ENCODE measurements at regions of chr4 and their contacts with region 1.

Region 1: DNA sequence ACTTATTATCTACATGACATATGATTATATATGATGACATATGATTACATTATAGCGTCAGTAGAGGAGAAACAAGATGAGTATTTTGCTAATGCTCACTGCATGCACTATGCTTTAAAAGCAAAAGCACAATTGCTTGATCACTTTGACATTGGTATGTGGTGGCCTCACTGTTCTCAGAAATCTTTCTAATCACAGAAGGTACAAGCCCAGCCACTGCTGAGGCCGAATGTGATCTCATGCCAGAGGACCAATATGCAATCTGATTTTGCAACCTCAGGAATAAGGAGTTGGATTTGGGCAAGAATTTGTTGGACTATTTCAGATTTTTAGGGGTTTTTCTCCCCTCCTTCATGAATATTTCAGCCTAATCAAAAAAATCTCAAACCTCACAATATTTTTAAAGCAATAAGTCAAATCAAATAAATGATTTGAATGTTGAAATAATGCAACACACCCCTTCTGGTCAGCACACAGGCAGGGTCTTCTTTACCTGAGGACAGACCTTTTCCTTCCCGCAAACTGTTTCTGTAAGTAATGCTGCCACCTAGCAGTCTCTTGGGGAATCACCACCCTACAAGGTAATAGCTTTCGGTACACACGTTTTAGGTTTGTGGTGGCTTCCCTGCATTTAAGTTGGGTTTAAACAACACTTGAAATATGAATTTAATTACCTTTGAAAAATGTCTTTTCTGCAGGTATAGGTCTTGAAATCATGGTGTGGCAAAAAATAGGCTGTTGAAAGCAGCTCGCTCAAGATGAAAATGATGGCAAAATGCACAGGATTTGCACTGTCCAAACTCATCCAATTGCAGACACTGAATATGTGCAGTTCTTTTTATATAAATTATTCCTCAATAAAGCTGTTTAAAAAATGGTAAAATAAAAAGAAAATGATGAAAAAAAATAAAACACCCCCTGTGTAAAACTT is 4.8 kb upstream of the CXCL13 start:
- DNase-seq: peak; percentile 59
- H3K4me3 Mint-ChIP-seq: no peak overlapping the region
- H3K27ac Mint-ChIP-seq: no peak overlapping the region
- H3K4me1 Mint-ChIP-seq: peaks cover 13% of the 10 kb centered on the region
- H3K27me3 Mint-ChIP-seq: peaks cover 11% of the 10 kb centered on the region

Region 2: GRCh38 chr4:77367638-77368037 is 233.1 kb before region 1 on chr4:
- CTCF ChIA-PET with region 1: interaction called, 4 read pairs
- intact Hi-C with region 1: loop called (anchors 2 kb)
- DNase-seq: no peak
- H3K4me3 Mint-ChIP-seq: no peak overlapping the region
- H3K27ac Mint-ChIP-seq: no peak overlapping the region
- H3K4me1 Mint-ChIP-seq: no peaks in the 10 kb centered on the region
- H3K27me3 Mint-ChIP-seq: peaks cover 4% of the 10 kb centered on the region

Region 3: DNA sequence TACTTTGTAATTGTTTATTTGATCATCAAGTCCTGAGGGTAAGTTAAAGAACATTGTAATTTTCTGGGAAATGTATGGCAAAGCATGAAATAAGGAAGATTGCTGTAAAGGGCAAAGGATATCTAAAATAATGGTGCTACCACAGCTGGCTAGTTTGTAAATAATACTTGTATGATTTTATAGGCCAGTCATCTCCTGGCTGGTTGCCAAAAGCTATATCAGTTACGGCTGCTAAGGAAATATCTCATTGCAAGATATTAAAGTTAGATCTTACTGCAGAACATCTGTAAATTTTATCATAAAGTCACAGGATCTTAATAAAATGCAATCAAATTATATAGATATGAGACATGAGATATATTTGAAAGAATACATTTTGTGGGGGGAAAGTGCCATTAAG is 145.9 kb before region 1 on chr4:
- CTCF ChIA-PET with region 1: interaction called, 10 read pairs
- intact Hi-C with region 1: no loop called
- DNase-seq: no peak
- H3K4me3 Mint-ChIP-seq: no peak overlapping the region
- H3K27ac Mint-ChIP-seq: no peak overlapping the region
- H3K4me1 Mint-ChIP-seq: no peaks in the 10 kb centered on the region
- H3K27me3 Mint-ChIP-seq: no peaks in the 10 kb centered on the region

Region 4: GRCh38 chr4:77473509-77473908 is 127.3 kb before region 1 on chr4:
- CTCF ChIA-PET with region 1: interaction called, 253 read pairs
- intact Hi-C with region 1: loop called (anchors 2 kb)
- DNase-seq: no peak
- H3K4me3 Mint-ChIP-seq: no peak overlapping the region
- H3K27ac Mint-ChIP-seq: no peak overlapping the region
- H3K4me1 Mint-ChIP-seq: no peaks in the 10 kb centered on the region
- H3K27me3 Mint-ChIP-seq: peaks cover 64% of the 10 kb centered on the region

Region 5: GRCh38 chr4:77618383-77619122 is 17.8 kb after region 1 on chr4:
- CTCF ChIA-PET with region 1: interaction called, 40 read pairs
- intact Hi-C with region 1: loop called (anchors 2 kb)
- DNase-seq: peak; percentile 81
- H3K4me3 Mint-ChIP-seq: no peak overlapping the region
- H3K27ac Mint-ChIP-seq: no peak overlapping the region
- H3K4me1 Mint-ChIP-seq: peaks cover 2% of the 10 kb centered on the region
- H3K27me3 Mint-ChIP-seq: peaks cover 12% of the 10 kb centered on the region

Region 6: DNA sequence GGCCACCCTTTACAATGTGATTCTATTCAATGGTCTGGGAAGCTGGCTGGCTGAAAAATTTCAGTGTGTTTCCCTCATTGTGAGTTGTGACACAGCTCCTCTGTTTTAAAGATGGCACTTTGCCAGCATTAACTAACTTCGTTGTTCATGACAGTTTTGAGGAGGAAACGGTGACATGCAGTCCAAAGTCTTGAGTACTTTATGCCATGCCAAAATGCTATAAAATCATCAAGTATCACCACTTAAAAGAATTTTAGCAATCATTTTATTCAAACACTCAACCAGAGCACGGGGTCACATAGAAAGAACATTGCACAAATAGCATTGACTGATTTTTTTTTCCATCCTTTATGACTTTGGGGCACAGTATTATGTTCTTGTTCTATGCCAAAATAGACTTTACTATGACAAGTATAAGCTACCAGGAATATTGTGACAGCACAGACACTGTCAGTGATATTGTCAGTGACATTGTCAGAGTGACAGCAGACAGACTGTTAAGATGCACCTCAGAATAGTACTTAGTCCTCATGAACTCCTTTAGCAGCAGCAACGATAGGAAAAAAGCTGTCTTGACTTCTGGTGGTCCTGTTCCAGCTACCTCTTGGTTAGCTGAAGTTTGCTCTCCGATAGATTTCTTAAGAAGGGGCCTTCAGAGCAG is 51.6 kb after region 1 on chr4:
- CTCF ChIA-PET with region 1: no interaction called
- intact Hi-C with region 1: no loop called
- DNase-seq: no peak
- H3K4me3 Mint-ChIP-seq: no peak overlapping the region
- H3K27ac Mint-ChIP-seq: no peak overlapping the region
- H3K4me1 Mint-ChIP-seq: no peaks in the 10 kb centered on the region
- H3K27me3 Mint-ChIP-seq: peaks cover 14% of the 10 kb centered on the region

Region 7: DNA sequence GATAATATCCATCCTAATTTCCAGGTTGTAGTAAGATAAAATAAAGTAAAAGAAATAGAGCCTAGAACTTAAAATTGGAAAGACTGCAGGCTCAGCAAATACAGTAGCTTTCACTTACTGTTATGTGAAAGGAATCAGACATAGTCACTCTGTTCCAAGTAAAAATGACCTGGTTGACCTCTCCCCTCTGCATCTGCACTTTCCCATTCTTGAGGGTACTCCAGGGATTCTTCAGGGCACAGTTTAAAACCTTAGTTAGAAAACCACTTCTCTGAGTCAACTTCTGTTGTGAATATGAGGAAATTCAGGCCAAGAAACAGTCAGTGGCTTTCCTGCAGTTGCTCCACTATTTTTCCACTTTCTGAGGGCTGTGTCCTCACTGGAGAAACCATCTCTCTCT is 499.3 kb after region 1 on chr4:
- CTCF ChIA-PET with region 1: no interaction called
- intact Hi-C with region 1: no loop called
- DNase-seq: no peak
- H3K4me3 Mint-ChIP-seq: no peak overlapping the region
- H3K27ac Mint-ChIP-seq: no peak overlapping the region
- H3K4me1 Mint-ChIP-seq: no peaks in the 10 kb centered on the region
- H3K27me3 Mint-ChIP-seq: no peaks in the 10 kb centered on the region